K562 (cell line): ENCODE measurements at regions of chr9 and their contacts with region 1.

Region 1: DNA sequence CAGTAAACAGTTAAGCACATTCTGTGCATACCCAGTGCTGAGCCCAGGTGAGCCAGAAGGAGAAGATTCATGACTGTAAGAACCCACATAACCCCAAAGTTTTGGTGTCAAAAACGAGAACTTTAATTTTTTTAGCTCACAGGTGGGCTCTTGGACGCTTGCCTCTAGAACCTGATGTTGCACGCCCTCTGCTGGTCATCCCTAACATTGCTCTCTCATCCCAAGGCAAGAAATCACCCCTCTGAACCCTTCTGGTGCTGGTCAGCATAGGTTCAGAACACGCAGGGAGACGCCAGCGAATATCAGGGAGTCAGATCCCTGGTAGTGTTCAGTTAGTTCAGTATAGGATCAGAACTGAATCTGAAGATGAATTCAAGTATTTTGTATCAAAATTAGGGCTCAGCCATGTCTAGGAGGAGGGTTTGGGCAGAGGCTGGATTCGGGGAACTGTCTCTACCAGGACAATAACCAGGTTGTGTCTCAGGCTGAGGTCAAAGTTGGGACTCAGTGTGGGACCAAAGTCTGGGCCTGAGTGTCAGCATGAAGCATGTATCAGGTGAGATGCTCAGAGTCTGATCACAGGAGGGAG is 4.1 kb upstream of the DNAJB5 start:
- DNase-seq: peak; percentile 34 to 74 (median 38)
- ATAC-seq: no peak
- H3K4me3 ChIP-seq: no peak overlapping the region
- H3K27ac ChIP-seq: no peak overlapping the region
- H3K4me1 ChIP-seq: peaks cover 6 to 17% of the 10 kb centered on the region in 2 experiments; a peak in 3 of 5 replicates
- H3K27me3 ChIP-seq: peaks cover 0 to 15% of the 10 kb centered on the region in 2 experiments; a peak in 1 of 5 replicates
- CTCF ChIP-seq: peak; percentile 71 to 84 (median 75)
- EP300 ChIP-seq: no peak
- POLR2A ChIP-seq: no peak
- RAD21 ChIP-seq: peak in 1 of 2 experiments; percentile 52; a peak in 3 of 4 replicates

Region 2: GRCh38 chr9:34907044-34907443 is 78.4 kb before region 1 on chr9:
- CTCF ChIA-PET with region 1: no interaction called
- POLR2A ChIA-PET with region 1: no interaction called
- in situ Hi-C with region 1: loop called (anchors 5 kb)
- intact Hi-C with region 1: no loop called
- DNase-seq: no peak
- ATAC-seq: no peak
- H3K4me3 ChIP-seq: no peak overlapping the region
- H3K27ac ChIP-seq: no peak overlapping the region
- H3K4me1 ChIP-seq: no peaks in the 10 kb centered on the region
- H3K27me3 ChIP-seq: 0 out of 5 replicates have a peak, but pooled peaks cover 3 to 5% of the 10 kb centered on the region in 2 experiments
- CTCF ChIP-seq: no peak
- EP300 ChIP-seq: no peak
- POLR2A ChIP-seq: no peak
- RAD21 ChIP-seq: no peak